MCF 10A (cell line): ENCODE measurements at regions of chr2 and their contacts with region 1.

Region 1: GRCh38 chr2:176814306-176815052 is 398.1 kb upstream of the HNRNPA3 start:
- DNase-seq: peak; percentile 38
- H3K4me3 Mint-ChIP-seq: no peak overlapping the region
- H3K27ac Mint-ChIP-seq: no peak overlapping the region
- H3K4me1 Mint-ChIP-seq: no peaks in the 10 kb centered on the region
- H3K27me3 Mint-ChIP-seq: peaks cover 12% of the 10 kb centered on the region
- CTCF ChIP-seq: peak; percentile 59

Region 2: GRCh38 chr2:176135034-176135440 is 679.4 kb before region 1 on chr2:
- CTCF ChIA-PET with region 1: interaction called, 8 read pairs
- POLR2A ChIA-PET with region 1: no interaction called
- intact Hi-C with region 1: loop called (anchors 2 kb)
- DNase-seq: no peak
- H3K4me3 Mint-ChIP-seq: no peak overlapping the region
- H3K27ac Mint-ChIP-seq: peak overlapping the region; percentile 53
- H3K4me1 Mint-ChIP-seq: no peaks in the 10 kb centered on the region
- H3K27me3 Mint-ChIP-seq: no peaks in the 10 kb centered on the region
- CTCF ChIP-seq: no peak

Region 3: GRCh38 chr2:176804392-176804791 is 10.1 kb before region 1 on chr2:
- CTCF ChIA-PET with region 1: interaction called, 21 read pairs
- POLR2A ChIA-PET with region 1: interaction called, 4 read pairs
- intact Hi-C with region 1: no loop called
- DNase-seq: no peak
- H3K4me3 Mint-ChIP-seq: no peak overlapping the region
- H3K27ac Mint-ChIP-seq: no peak overlapping the region
- H3K4me1 Mint-ChIP-seq: no peaks in the 10 kb centered on the region
- H3K27me3 Mint-ChIP-seq: no peaks in the 10 kb centered on the region
- CTCF ChIP-seq: no peak

Region 4: DNA sequence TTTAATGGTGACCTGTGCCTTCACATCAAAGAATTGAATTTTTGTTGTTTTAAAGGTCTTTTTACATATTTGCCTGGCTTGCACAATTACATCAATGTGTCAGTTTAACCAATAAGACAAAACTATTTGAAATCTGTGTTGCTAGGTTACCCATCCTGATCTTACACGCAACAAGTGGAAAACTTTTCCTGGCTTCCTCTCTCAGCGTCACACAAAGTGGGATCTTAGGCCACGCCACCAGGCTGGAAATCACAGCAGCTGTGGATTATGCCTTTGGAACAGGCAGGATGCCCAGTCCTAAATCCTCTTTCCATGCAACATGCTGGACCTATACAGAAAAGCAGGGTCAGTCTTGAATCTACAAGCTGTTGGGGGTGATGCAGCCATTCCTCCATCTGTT is 99.9 kb after region 1 on chr2:
- CTCF ChIA-PET with region 1: no interaction called
- POLR2A ChIA-PET with region 1: no interaction called
- intact Hi-C with region 1: no loop called
- DNase-seq: no peak
- H3K4me3 Mint-ChIP-seq: no peak overlapping the region
- H3K27ac Mint-ChIP-seq: no peak overlapping the region
- H3K4me1 Mint-ChIP-seq: no peaks in the 10 kb centered on the region
- H3K27me3 Mint-ChIP-seq: peaks cover 37% of the 10 kb centered on the region
- CTCF ChIP-seq: no peak

Region 5: GRCh38 chr2:177148477-177149154 is 334.1 kb after region 1 on chr2:
- CTCF ChIA-PET with region 1: interaction called, 33 read pairs
- POLR2A ChIA-PET with region 1: interaction called, 3 read pairs
- intact Hi-C with region 1: loop called (anchors 1 kb)
- DNase-seq: peak; percentile 84
- H3K4me3 Mint-ChIP-seq: peak overlapping the region; percentile 70
- H3K27ac Mint-ChIP-seq: no peak overlapping the region
- H3K4me1 Mint-ChIP-seq: peaks cover 15% of the 10 kb centered on the region
- H3K27me3 Mint-ChIP-seq: peaks cover 66% of the 10 kb centered on the region
- CTCF ChIP-seq: peak; percentile 70